ENCODE measurements at regions of chr9 and their contacts with region 1.

Region 1: GRCh38 chr9:2014696-2015580 is at the start of gene SMARCA2:
- DNase-seq: peak; percentile 97 to 98 (median 98)
- H3K4me3 ChIP-seq: peak within 1 kb of the TSS; percentile 84 to 98
- H3K4me3 Mint-ChIP-seq: peak within 1 kb of the TSS; percentile 95 to 100 (median 99)
- H3K27ac ChIP-seq: peak within 1 kb of the TSS; percentile 92
- H3K27ac Mint-ChIP-seq: peak within 1 kb of the TSS; percentile 96 to 100 (median 99)
- H3K4me1 ChIP-seq: peaks cover 29% of the 10 kb centered on the region
- H3K4me1 Mint-ChIP-seq: peaks cover 15 to 40% (median 24%) of the 10 kb centered on the region in 4 donors
- H3K27me3 ChIP-seq: no peaks in the 10 kb centered on the region
- H3K27me3 Mint-ChIP-seq: peaks cover 0 to 3% of the 10 kb centered on the region in 2 donors
- total RNA-seq, gene SMARCA2: 227 to 245 TPM

Region 2: DNA sequence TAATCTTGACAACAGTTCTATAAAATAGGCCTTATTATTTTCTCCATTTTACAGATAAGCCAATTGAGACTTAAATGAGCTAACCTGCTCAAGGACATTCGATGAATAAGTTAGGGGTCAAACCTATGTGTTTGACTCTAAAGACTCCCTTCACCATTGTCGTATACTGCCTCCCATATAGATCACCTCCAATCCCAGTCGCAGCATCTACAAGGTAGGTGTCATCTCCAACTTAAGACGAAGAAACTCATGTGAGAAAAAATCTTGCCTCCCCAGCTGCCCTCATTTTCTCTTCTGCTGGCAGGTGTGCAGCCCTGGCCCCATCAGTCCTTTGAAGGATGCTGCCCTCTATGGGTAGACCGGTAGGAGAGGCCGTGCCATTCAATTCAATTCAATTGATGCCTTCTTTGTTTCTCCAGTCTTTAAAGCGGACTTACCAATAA is 75.0 kb before region 1 on chr9:
- CTCF ChIA-PET with region 1: no interaction called
- POLR2A ChIA-PET with region 1: no interaction called
- intact Hi-C with region 1: loop called (anchors 5 kb)
- DNase-seq: peak; percentile 38 to 48 (median 46)
- H3K4me3 ChIP-seq: no peak overlapping the region
- H3K4me3 Mint-ChIP-seq: no peak overlapping the region
- H3K27ac ChIP-seq: no peak overlapping the region
- H3K27ac Mint-ChIP-seq: no peak overlapping the region
- H3K4me1 ChIP-seq: no peaks in the 10 kb centered on the region
- H3K4me1 Mint-ChIP-seq: peaks cover 0 to 4% (median 2%) of the 10 kb centered on the region in 4 donors
- H3K27me3 ChIP-seq: no peaks in the 10 kb centered on the region
- H3K27me3 Mint-ChIP-seq: peaks cover 1 to 7% of the 10 kb centered on the region in 2 donors

Region 3: DNA sequence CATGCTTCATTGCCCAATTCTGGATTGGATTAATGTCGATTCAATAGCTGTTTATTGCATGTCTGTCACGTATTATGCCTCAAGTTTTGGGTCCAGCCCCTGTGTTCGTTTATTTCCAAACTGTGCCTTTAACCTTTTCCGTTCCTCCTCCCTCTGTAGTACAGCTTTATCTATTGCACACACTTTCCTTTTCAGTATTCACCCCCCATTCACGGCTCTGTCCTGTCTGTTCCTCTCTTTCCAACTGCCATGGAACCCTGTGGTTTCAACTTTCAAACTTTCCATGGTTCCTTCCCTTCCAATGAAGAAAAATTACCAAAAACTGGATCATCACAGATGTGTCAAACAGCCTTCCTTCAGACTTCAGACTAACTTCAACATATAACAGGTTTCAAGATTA is 17.3 kb after region 1 on chr9:
- CTCF ChIA-PET with region 1: no interaction called
- POLR2A ChIA-PET with region 1: interaction called, 88 read pairs
- intact Hi-C with region 1: loop called (anchors 2 kb)
- DNase-seq: no peak
- H3K4me3 ChIP-seq: no peak overlapping the region
- H3K4me3 Mint-ChIP-seq: no peak overlapping the region
- H3K27ac ChIP-seq: no peak overlapping the region
- H3K27ac Mint-ChIP-seq: peak overlapping the region in 4 of 7 donors; percentile 12 to 89 (median 44)
- H3K4me1 ChIP-seq: peaks cover 56% of the 10 kb centered on the region
- H3K4me1 Mint-ChIP-seq: peaks cover 55 to 77% (median 60%) of the 10 kb centered on the region in 4 donors
- H3K27me3 ChIP-seq: no peaks in the 10 kb centered on the region
- H3K27me3 Mint-ChIP-seq: no peaks in the 10 kb centered on the region

Region 4: DNA sequence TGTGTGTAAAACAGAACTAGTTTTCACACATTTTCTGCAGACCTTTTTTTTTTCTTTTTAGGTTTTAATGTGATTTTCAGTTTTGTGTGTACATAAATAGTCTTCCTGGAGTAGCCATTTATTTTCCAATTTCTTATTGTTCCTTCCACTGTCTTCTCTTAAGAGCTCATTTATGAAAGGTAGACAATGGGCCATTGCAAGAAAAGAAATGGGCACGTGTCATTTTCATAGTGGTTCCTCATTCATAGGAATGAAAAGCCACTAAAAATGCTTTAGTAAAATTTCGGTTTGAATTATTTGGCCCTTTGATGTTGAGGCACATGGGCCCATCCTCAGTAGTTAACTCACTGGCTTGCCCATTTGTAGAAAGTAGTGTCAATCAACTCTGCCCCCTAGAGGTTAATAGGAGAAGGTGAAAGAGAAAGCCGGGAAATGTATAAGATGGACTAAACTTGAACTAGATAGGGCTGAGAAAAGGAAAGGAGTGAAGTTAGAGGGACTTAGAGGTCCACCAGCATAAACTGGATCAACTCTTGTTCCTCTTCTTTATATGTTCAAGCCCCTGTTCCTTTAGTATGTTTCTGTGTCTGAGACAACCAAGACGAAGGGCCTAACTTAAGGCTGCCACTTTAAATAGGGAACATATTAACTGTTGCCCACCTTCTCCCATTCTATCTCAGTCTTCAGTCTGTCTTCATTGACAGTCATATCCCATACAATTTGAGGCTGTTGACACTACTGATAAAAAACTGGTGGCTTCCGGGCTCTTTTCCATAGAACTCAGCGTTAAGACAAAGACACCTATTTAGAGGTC is 72.8 kb after region 1 on chr9:
- CTCF ChIA-PET with region 1: interaction called, 5 read pairs
- POLR2A ChIA-PET with region 1: interaction called, 6 read pairs
- intact Hi-C with region 1: loop called (anchors 1 kb)
- DNase-seq: peak in 4 of 5 donors; percentile 60 to 64 (median 60)
- H3K4me3 ChIP-seq: no peak overlapping the region
- H3K4me3 Mint-ChIP-seq: no peak overlapping the region
- H3K27ac ChIP-seq: no peak overlapping the region
- H3K27ac Mint-ChIP-seq: peak overlapping the region in 3 of 7 donors; percentile 3 to 60 (median 54)
- H3K4me1 ChIP-seq: no peaks in the 10 kb centered on the region
- H3K4me1 Mint-ChIP-seq: peaks cover 3 to 6% (median 5%) of the 10 kb centered on the region in 4 donors
- H3K27me3 ChIP-seq: no peaks in the 10 kb centered on the region
- H3K27me3 Mint-ChIP-seq: no peaks in the 10 kb centered on the region

Region 5: DNA sequence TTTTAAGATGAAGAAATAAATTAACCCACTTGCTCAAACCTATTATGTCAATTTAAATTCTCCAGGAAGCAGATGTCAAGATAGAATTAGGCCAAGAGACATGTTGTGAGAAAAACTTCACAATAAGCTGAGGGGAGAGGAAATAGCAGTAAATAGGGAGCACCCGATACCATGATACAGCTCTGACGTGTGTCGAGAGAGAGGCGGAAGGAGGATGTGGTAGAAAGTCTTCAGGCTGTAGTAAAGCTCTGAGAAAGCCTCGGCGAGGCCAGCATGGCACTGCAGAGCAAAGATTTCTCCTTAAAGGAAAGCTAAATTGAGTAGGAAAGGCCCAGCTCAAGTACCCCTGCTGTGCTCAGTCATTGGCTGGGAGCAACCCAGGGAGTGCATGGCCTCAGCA is 835.0 kb after region 1 on chr9:
- CTCF ChIA-PET with region 1: no interaction called
- POLR2A ChIA-PET with region 1: no interaction called
- intact Hi-C with region 1: loop called (anchors 2 kb)
- DNase-seq: peak in 3 of 5 donors; percentile 22 to 52 (median 49)
- H3K4me3 ChIP-seq: no peak overlapping the region
- H3K4me3 Mint-ChIP-seq: peak overlapping the region in 1 of 8 donors; percentile 0
- H3K27ac ChIP-seq: no peak overlapping the region
- H3K27ac Mint-ChIP-seq: peak overlapping the region in 6 of 7 donors; percentile 18 to 90 (median 43)
- H3K4me1 ChIP-seq: peaks cover 8% of the 10 kb centered on the region
- H3K4me1 Mint-ChIP-seq: peaks cover 0 to 8% (median 5%) of the 10 kb centered on the region in 4 donors
- H3K27me3 ChIP-seq: peaks cover 2% of the 10 kb centered on the region
- H3K27me3 Mint-ChIP-seq: peaks cover 8 to 10% of the 10 kb centered on the region in 2 donors